ENCODE measurements at regions of chr6 and their contacts with region 1.

Region 1: DNA sequence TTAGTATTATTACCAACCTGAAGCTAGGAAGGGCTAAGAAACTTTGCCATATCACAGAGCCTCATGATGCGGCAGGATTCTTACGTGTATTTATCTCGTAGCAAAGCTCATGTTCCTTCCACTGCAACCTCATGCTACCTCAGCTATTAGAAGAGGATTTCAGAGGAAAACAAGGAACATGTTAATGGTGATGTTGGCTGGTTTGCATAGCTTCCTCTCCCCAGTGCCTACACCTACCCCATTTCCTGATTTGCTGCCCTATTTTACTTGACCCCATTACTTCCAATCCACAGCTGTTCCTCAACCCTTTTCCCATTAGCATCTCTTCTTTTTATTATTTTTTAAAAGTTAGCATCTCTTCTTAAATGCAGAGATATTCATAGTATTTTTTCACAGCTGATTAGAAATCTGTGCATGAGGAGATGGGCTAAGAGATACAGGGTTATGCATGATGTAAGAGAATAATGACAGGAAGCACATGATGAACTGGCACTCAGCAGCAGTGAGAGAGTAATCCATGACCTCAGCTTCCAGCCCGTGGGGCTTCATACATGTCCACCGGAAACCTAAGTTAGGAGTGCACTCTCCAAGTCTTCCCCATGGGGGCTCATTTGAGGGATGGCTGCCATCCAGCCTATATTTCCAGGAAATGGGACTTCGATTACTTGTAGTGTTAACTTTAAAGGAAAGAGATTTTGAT is 106.1 kb upstream of the ASF1A start:
- DNase-seq: no peak

Region 2: GRCh38 chr6:118651282-118652050 is 136.4 kb before region 1 on chr6 and contains the start of gene CEP85L:
- intact Hi-C with region 1: loop called in 1 of 2 experiments (anchors 10 kb)
- DNase-seq: peak; percentile 96
- total RNA-seq, gene CEP85L: 14.0 to 15.4 TPM

Measured in posterior vena cava (tissue), 2 donors.